IMR-90 (cell line): ENCODE measurements at regions of chr1 and their contacts with region 1.

Region 1: DNA sequence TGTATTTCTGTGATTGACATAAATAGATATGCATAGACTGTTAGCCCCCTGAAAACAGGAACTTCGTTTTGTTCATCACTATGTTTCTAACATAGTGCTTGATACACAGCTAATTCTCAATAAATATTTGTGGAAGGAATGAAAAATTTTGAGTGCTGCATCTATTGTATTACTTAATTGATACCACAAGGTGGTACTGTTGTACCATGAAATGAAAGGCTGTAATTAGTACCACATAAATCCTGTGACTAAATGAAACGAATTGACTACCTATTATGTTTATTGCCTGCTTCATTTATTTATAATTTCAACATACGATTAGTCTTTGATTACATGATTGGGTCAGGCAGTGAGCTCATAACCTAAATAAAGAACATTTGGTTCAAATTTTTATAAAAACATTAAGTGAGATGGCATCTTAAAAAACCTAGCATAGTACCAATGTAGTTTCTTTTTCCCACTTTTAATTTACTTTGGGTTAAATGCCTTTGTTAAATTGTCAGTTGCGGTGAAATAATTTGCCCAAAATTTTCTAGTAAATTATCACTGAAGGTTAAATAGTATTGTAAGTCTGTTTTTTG is 15.0 kb upstream of the TGFB2 start:
- DNase-seq: peak; percentile 61
- ATAC-seq: peak; percentile 74
- H3K4me3 ChIP-seq: no peak overlapping the region
- H3K27ac ChIP-seq: no peak overlapping the region
- H3K4me1 ChIP-seq: peaks cover 2% of the 10 kb centered on the region; the same call in 1 of the 2 replicates
- H3K27me3 ChIP-seq: no peaks in the 10 kb centered on the region
- CTCF ChIP-seq: peak; percentile 78
- POLR2A ChIP-seq: no peak
- RAD21 ChIP-seq: peak; percentile 92

Region 2: GRCh38 chr1:219385786-219386427 is 1055.8 kb after region 1 on chr1:
- CTCF ChIA-PET with region 1: no interaction called
- POLR2A ChIA-PET with region 1: no interaction called
- dilution Hi-C with region 1: no loop called
- in situ Hi-C with region 1: no loop called
- intact Hi-C with region 1: loop called (anchors 5 kb)
- DNase-seq: peak; percentile 71
- ATAC-seq: peak; percentile 87
- H3K4me3 ChIP-seq: no peak overlapping the region
- H3K27ac ChIP-seq: no peak overlapping the region
- H3K4me1 ChIP-seq: peaks cover 2% of the 10 kb centered on the region; the same call in 1 of the 2 replicates
- H3K27me3 ChIP-seq: no peaks in the 10 kb centered on the region
- CTCF ChIP-seq: peak; percentile 83
- POLR2A ChIP-seq: no peak
- RAD21 ChIP-seq: peak; percentile 92

Region 3: GRCh38 chr1:219416594-219417238 is 1086.6 kb after region 1 on chr1:
- CTCF ChIA-PET with region 1: no interaction called
- POLR2A ChIA-PET with region 1: no interaction called
- dilution Hi-C with region 1: no loop called
- in situ Hi-C with region 1: no loop called
- intact Hi-C with region 1: loop called (anchors 10 kb)
- DNase-seq: peak; percentile 50
- ATAC-seq: peak; percentile 56; the same call in 1 of the 2 replicates
- H3K4me3 ChIP-seq: no peak overlapping the region
- H3K27ac ChIP-seq: no peak overlapping the region
- H3K4me1 ChIP-seq: no peaks in the 10 kb centered on the region
- H3K27me3 ChIP-seq: no peaks in the 10 kb centered on the region
- CTCF ChIP-seq: peak; percentile 64
- POLR2A ChIP-seq: no peak
- RAD21 ChIP-seq: peak; percentile 69

Region 4: DNA sequence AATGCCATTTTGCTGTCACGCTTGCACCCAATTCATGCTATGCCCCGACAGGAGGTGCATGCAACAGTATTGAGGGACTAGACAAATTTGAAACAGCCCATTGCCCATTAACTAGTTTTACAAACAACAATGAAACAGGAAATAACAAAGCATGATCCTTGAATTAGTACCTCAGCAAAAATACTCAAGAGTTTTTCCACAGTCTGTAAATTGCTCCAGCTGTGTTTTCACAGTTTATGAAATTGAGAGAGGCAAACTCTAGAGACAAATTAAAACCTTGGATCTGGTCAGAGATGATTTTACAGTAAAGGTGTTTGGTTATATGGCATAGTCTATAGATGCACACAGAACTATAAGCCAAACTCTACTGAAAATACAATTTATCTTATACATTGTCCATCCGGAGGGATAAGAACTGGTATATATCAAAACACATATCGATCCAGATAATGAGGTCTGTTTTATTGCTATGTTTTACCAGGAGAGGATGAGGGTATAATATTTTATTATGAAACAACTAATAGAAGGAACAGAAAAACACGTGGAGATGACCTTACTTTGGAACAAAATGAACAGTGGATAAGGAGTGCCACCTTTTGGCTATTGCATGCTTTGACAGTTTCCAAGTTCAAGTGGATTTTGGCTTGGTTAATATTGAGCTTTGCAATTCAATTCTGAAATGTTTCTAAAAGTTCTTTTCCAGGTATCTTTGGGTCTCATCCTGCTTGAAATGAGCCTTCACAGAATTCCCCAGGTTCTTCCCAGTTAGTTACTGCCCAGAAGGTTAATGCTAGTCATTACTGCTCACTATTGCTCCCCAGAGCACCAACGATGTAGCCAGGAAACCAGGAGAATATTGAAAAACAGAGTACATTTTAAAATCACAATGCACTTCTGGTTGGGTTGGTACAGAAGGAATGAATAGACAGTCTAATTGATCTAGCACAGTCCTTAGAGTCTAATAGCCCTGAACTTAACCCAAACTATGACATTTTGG is 1237.1 kb after region 1 on chr1:
- CTCF ChIA-PET with region 1: no interaction called
- POLR2A ChIA-PET with region 1: no interaction called
- dilution Hi-C with region 1: no loop called
- in situ Hi-C with region 1: loop called (anchors 5 kb)
- intact Hi-C with region 1: loop called (anchors 5 kb)
- DNase-seq: peak; percentile 71
- ATAC-seq: peak; percentile 75
- H3K4me3 ChIP-seq: no peak overlapping the region
- H3K27ac ChIP-seq: no peak overlapping the region
- H3K4me1 ChIP-seq: no peaks in the 10 kb centered on the region
- H3K27me3 ChIP-seq: no peaks in the 10 kb centered on the region
- CTCF ChIP-seq: peak; percentile 70
- POLR2A ChIP-seq: no peak
- RAD21 ChIP-seq: peak; percentile 79

Region 5: DNA sequence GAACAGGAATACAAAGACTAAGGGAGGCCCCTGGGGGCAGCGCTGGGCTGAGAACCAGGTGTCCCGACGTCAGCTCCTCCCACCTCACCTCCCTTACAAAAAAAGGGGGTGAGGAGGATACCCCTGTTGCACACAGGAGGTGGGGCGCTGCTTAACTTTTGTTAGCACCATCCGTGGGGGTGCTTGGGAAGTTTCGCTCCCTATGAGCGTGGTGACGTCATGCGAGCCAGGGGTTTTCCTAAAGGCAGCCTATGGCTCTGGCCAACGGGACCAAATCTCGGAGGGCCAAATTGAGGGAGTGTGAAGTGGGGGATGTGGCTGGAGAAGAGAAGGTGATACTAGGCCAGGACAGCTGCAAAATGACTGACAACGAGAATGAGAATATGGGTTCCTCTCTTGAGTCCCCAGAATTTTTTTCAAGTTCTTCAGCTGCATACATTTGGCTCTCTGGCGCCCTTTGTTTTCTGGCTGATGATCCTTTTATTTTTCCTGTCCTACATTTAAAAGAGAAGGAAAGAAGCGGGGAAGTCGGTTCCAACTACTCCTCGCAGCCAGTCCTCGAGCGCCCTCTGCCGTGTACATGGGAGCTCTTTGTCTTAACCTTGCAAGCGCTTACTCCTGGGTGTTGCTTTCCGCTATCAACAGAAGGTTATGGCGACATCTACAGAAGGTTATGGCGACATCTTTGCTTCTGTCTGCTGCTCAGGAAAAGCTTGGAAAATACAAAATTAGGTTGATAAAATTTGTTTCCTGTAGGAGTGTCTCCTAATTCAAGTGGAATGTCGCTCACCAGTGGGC is 1330.7 kb after region 1 on chr1:
- CTCF ChIA-PET with region 1: interaction called, 4 read pairs
- POLR2A ChIA-PET with region 1: no interaction called
- dilution Hi-C with region 1: no loop called
- in situ Hi-C with region 1: loop called (anchors 10 kb)
- intact Hi-C with region 1: loop called (anchors 1 kb)
- DNase-seq: peak; percentile 88
- ATAC-seq: peak; percentile 92
- H3K4me3 ChIP-seq: no peak overlapping the region
- H3K27ac ChIP-seq: peak overlapping the region; percentile 60; the same call in 1 of the 2 replicates
- H3K4me1 ChIP-seq: peaks cover 6% of the 10 kb centered on the region; the same call in 1 of the 2 replicates
- H3K27me3 ChIP-seq: no peaks in the 10 kb centered on the region
- CTCF ChIP-seq: peak; percentile 89
- POLR2A ChIP-seq: 0 out of 2 replicates have a peak, but pooled peaks have one; percentile 27
- RAD21 ChIP-seq: peak; percentile 81